HEK293 (cell line): ENCODE measurements at regions of chr14 and their contacts with region 1.

Region 1: GRCh38 chr14:49767562-49768300 is at the start of gene KLHDC2:
- H3K4me3 ChIP-seq: peak within 1 kb of the TSS; percentile 99
- H3K27ac ChIP-seq: peak within 1 kb of the TSS; percentile 98
- H3K4me1 ChIP-seq: peaks cover 18% of the 10 kb centered on the region
- CTCF ChIP-seq: no peak

Region 2: DNA sequence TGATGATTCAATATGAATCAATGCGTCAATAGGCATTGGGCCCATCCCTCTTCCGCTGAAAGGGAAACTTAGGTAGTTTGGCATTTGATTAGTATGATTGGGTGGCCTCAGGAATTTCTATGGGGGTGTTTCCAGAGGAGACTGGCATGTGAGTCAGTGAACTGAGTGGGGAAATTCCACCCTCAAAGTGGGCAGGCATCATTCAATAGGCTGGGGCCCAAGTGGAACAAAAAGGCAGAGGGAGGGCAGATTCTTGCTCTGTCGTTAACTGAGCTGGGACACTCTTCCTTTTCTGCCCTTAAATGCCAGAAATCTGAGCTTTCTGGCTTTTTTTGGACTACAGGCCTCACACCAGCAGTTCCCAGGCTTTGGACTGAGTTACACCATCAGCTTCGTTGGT is 555.0 kb before region 1 on chr14:
- CTCF ChIA-PET with region 1: no interaction called
- POLR2A ChIA-PET with region 1: no interaction called
- H3K4me3 ChIP-seq: no peak overlapping the region
- H3K27ac ChIP-seq: no peak overlapping the region
- H3K4me1 ChIP-seq: no peaks in the 10 kb centered on the region
- CTCF ChIP-seq: no peak

Region 3: DNA sequence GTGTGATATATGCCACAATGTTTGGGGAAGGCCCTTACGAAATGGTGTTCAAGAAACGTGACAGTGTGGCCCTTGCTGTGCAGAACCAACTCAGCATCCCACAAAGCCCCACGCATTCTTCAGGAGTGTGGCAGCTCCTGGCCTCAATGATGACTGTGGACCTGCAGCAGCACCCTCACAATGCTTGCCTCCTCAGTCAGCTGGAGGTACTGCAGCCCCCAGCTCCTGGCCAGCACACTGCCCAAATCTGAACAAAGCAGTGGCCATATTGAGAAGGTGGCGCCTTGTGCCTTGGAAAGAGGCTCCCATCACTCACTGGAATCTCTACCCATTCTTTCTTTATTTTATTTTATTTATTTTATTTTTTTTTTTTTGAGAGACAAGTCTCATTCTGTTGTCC is 90.1 kb before region 1 on chr14:
- CTCF ChIA-PET with region 1: no interaction called
- POLR2A ChIA-PET with region 1: no interaction called
- H3K4me3 ChIP-seq: no peak overlapping the region
- H3K27ac ChIP-seq: no peak overlapping the region
- H3K4me1 ChIP-seq: no peaks in the 10 kb centered on the region
- CTCF ChIP-seq: no peak

Region 4: GRCh38 chr14:49687942-49688700 is 79.6 kb before region 1 on chr14 and contains the start of gene POLE2:
- CTCF ChIA-PET with region 1: no interaction called
- POLR2A ChIA-PET with region 1: interaction called, 19 read pairs
- H3K4me3 ChIP-seq: peak within 1 kb of the TSS; percentile 80
- H3K27ac ChIP-seq: peak within 1 kb of the TSS; percentile 84
- H3K4me1 ChIP-seq: no peaks in the 10 kb centered on the region; the same call in 1 of the 2 replicates
- CTCF ChIP-seq: no peak

Region 5: DNA sequence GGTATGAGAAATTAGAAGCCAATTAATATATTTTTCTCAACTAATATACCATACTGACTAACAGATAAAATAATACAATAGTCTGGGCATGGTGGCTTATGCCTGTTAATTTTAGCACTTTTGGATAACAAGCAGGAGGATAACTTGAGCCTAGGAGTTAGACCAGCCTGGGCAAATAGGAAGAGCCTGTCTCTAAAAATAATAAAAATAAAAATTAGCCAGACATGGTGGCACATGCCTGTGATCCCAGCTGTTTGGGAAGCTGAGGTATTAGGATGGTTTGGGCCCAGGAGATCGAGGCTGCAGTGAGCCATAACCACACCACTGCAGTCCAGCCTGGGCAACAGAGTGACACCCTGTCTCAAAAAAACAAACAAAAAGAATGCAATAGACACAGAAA is 24.9 kb after region 1 on chr14:
- CTCF ChIA-PET with region 1: no interaction called
- POLR2A ChIA-PET with region 1: no interaction called
- H3K4me3 ChIP-seq: no peak overlapping the region
- H3K27ac ChIP-seq: no peak overlapping the region
- H3K4me1 ChIP-seq: no peaks in the 10 kb centered on the region
- CTCF ChIP-seq: no peak

Region 6: DNA sequence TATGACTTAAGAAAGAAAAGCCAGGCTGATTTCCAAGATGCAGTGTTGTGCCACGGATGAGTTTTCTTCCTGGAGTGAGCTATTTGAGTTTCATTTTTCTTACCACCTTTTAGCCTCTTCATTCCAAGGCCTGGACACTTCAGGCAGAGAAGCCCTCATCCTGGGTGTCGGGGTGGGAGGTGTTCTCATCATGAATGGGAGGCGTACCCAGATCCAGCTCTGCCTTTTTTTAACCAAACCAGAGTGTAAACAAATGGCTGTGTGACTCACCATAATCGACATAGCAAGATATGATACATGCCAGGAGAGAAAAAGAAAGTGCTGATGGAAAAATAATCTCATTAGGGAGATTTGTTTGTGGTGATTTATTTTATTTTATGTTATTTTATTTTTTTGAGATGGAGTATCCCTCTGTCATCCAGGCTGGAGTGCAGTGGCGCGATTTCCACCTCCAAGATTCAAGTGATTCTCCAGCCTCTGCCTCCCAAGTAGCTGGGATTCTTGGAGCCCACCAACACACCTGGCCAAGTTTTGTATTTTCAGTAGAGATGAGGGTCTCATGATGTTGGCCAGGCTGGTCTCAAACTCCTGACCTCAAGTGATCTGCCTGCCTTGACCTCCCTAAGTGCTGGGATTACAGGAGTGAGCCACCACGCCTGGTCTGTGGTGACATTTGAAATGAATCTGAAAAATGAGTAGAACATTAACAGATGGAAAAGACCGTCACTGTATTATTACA is 205.3 kb after region 1 on chr14:
- CTCF ChIA-PET with region 1: no interaction called
- POLR2A ChIA-PET with region 1: no interaction called
- H3K4me3 ChIP-seq: no peak overlapping the region
- H3K27ac ChIP-seq: peak overlapping the region; percentile 92; the same call in 1 of the 2 replicates
- H3K4me1 ChIP-seq: peaks cover 34% of the 10 kb centered on the region
- CTCF ChIP-seq: no peak